ENCODE measurements at regions of chr22 and their contacts with region 1.

Region 1: GRCh38 chr22:50236731-50237409 is 8.0 kb downstream of the TUBGCP6 start:
- DNase-seq: peak; percentile 25 to 36
- ATAC-seq: peak; percentile 69 to 70; a peak in 4 of 6 replicates
- H3K4me3 ChIP-seq: no peak overlapping the region
- H3K27ac ChIP-seq: no peak overlapping the region
- H3K4me1 ChIP-seq: peaks cover 7% of the 10 kb centered on the region; the same call in 2 of the 3 replicates
- CTCF ChIP-seq: peak; percentile 36; the same call in 2 of the 3 replicates
- EP300 ChIP-seq: no peak
- POLR2A ChIP-seq: no peak
- RAD21 ChIP-seq: peak; percentile 24 to 27; a peak in 1 of 5 replicates

Region 2: GRCh38 chr22:50136581-50137015 is 100.3 kb before region 1 on chr22:
- CTCF ChIA-PET with region 1: no interaction called
- POLR2A ChIA-PET with region 1: no interaction called
- DNase-seq: no peak
- ATAC-seq: no peak
- H3K4me3 ChIP-seq: no peak overlapping the region
- H3K27ac ChIP-seq: no peak overlapping the region
- H3K4me1 ChIP-seq: peaks cover 10% of the 10 kb centered on the region; the same call in 1 of the 3 replicates
- CTCF ChIP-seq: no peak
- EP300 ChIP-seq: no peak
- POLR2A ChIP-seq: no peak
- RAD21 ChIP-seq: no peak

Region 3: GRCh38 chr22:50226063-50226874 is 10.6 kb before region 1 on chr22:
- CTCF ChIA-PET with region 1: interaction called, 19 read pairs
- POLR2A ChIA-PET with region 1: interaction called, 3 read pairs
- DNase-seq: no peak
- ATAC-seq: no peak
- H3K4me3 ChIP-seq: no peak overlapping the region
- H3K27ac ChIP-seq: no peak overlapping the region
- H3K4me1 ChIP-seq: no peaks in the 10 kb centered on the region
- CTCF ChIP-seq: no peak
- EP300 ChIP-seq: no peak
- POLR2A ChIP-seq: no peak
- RAD21 ChIP-seq: no peak